Head of caudate nucleus (tissue), 42 donors: ENCODE measurements at regions of chr4 and their contacts with region 1.

Region 1: DNA sequence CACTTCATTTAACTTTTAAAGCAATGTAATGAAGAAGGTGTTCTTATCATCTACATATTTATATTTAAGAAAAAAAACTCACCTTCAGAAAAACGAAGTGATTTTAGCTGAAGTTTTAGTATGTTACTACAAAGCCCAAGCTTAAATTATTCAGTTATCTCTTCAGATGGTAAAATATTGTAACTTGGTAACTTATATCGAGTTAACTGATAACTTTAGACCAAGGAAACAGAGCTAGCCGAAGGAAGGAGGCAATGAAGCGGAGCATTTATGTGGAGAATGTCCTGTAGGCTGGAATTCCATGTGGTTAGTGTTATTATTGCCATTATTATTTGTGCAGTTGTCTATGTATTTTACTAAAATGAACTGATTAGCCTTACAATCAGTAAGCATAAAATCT is 1102.1 kb upstream of the LCORL start:
- DNase-seq: no peak

Region 2: GRCh38 chr4:19074036-19074435 is 49.6 kb before region 1 on chr4:
- intact Hi-C with region 1: loop called (anchors 5 kb)
- DNase-seq: no peak